Activated CD4-positive, alpha-beta T cell treated with anti-CD3 and anti-CD28 coated beads, Interleukin-2, amount 10 ng/mL, durations not matched to agents 24 days and 14 days (primary cell): ENCODE measurements at regions of chr7 and their contacts with region 1.

Region 1: GRCh38 chr7:39623018-39623731 is at the start of gene RALA:
- DNase-seq: peak; percentile 97
- H3K4me3 Mint-ChIP-seq: peak within 1 kb of the TSS; percentile 99
- H3K27ac Mint-ChIP-seq: peak within 1 kb of the TSS; percentile 95
- H3K4me1 Mint-ChIP-seq: peaks cover 35% of the 10 kb centered on the region
- H3K27me3 Mint-ChIP-seq: peaks cover 2% of the 10 kb centered on the region
- total RNA-seq, gene RALA: 35.5 and 37.0 TPM in 2 replicates

Region 2: DNA sequence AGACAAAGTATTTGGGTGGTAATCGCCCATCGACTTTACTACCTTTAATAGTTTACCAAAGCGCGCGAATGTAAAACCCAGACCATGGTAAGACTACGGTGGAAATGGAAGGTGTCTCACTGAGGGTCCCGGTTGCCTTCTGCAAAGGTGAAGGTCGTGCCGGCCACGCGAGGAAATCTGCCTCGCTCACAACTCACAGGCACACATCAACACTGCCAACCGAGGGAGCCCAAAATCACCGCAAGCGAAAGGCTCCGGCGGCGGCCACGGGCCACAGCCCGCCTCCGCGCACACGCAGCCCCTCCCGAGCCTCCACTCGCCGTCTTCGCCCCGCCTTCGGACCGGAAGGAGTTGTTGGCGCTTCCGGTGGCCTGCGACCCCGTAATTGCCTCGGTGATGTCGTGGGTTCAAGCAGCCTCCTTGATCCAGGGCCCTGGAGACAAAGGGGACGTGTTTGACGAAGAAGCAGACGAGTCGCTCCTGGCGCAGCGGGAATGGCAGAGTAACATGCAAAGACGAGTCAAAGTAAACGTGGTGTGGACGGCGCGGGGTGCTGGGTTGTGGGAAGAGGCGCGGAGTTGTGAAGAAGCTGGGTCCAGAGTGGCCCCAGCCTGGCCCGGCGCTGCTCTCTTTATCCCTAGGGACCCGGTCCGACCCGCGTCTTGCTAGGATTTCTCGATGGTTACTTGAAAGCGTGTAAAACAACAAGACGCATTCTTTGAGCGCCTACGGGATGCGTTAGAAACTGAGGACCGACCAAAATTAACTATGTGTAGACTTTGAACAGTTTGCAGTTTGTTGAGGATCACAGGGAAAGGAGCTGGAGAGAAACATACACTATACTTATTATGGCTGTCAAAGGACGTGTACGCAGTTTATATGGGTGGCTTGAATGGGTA is 56.9 kb before region 1 on chr7 and contains the start of gene YAE1:
- intact Hi-C with region 1: loop called (anchors 2 kb)
- DNase-seq: peak; percentile 94
- H3K4me3 Mint-ChIP-seq: peak within 1 kb of the TSS; percentile 99
- H3K27ac Mint-ChIP-seq: peak within 1 kb of the TSS; percentile 97
- H3K4me1 Mint-ChIP-seq: peaks cover 19% of the 10 kb centered on the region
- H3K27me3 Mint-ChIP-seq: peaks cover 7% of the 10 kb centered on the region
- total RNA-seq, gene YAE1: 14.2 and 14.3 TPM in 2 replicates

Region 3: GRCh38 chr7:39589323-39590111 is 33.7 kb before region 1 on chr7:
- intact Hi-C with region 1: loop called (anchors 1 kb)
- DNase-seq: peak; percentile 93
- H3K4me3 Mint-ChIP-seq: peak overlapping the region; percentile 73
- H3K27ac Mint-ChIP-seq: peak overlapping the region; percentile 93
- H3K4me1 Mint-ChIP-seq: peaks cover 38% of the 10 kb centered on the region
- H3K27me3 Mint-ChIP-seq: peaks cover 2% of the 10 kb centered on the region

Region 4: GRCh38 chr7:39691821-39692220 is 68.6 kb after region 1 on chr7:
- intact Hi-C with region 1: loop called (anchors 10 kb)
- DNase-seq: no peak
- H3K4me3 Mint-ChIP-seq: no peak overlapping the region
- H3K27ac Mint-ChIP-seq: no peak overlapping the region
- H3K4me1 Mint-ChIP-seq: peaks cover 2% of the 10 kb centered on the region
- H3K27me3 Mint-ChIP-seq: no peaks in the 10 kb centered on the region

Region 5: GRCh38 chr7:40134428-40135316 is 511.5 kb after region 1 on chr7 and contains the starts of genes MPLKIP and SUGCT:
- intact Hi-C with region 1: loop called (anchors 5 kb)
- DNase-seq: peak; percentile 96
- H3K4me3 Mint-ChIP-seq: peak within 1 kb of the TSS; percentile 95
- H3K27ac Mint-ChIP-seq: peak within 1 kb of the TSS; percentile 94
- H3K4me1 Mint-ChIP-seq: peaks cover 11% of the 10 kb centered on the region
- H3K27me3 Mint-ChIP-seq: peaks cover 11% of the 10 kb centered on the region
- total RNA-seq, gene MPLKIP: 37.3 and 40.8 TPM in 2 replicates
- total RNA-seq, gene SUGCT: 0.91 and 1.0 TPM in 2 replicates